Mammary epithelial cell (primary cell): ENCODE measurements at regions of chr18 and their contacts with region 1.

Region 1: DNA sequence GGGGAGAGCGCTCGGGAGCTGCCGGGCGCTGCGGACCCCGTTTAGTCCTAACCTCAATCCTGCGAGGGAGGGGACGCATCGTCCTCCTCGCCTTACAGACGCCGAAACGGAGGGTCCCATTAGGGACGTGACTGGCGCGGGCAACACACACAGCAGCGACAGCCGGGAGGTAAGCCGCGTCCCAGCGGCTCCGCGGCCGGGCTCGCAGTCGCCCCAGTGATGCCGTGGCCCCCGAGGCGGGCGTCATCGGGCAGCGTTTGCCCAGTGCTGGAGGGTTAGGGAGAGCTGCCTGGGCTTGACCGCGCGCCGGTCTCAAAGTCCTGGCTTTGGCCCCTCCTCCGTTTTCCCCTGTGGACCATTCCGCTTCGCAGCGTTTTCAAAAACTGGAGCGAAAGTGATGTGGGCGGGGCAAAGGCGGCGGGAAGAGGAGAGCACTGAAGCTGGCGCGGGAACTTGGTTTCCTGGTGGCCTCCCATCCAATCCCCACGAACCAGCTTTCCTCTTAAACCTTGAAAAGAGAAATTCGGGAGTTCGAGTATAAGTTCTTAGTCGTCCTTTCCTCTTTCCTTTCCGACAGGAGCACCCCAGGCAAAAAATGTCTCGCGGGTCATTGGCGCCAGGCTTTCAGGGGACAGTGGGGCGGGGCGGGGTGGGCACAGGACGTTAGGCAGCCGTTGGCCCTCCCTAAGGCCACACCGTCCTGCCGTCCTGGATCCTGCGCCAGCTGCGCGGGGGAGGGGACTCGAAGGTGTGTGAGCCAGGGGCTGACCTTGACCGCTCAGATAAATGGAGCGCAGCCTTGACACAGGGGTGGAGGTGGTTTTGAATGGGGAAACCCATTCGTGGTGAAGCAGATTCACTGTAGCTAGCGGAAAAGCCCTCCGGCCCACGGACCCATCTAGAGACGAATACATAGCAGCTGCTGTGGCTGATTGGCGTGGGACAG is 821 bp downstream of the TYMS start:
- DNase-seq: peak; percentile 92
- H3K4me3 ChIP-seq: peak overlapping the region; percentile 79 to 92 (median 88)
- H3K27ac ChIP-seq: peak overlapping the region; percentile 77
- H3K4me1 ChIP-seq: peaks cover 11% of the 10 kb centered on the region
- H3K27me3 ChIP-seq: no peaks in the 10 kb centered on the region
- CTCF ChIP-seq: no peak

Region 2: GRCh38 chr18:335733-336132 is 322.5 kb before region 1 on chr18:
- CTCF ChIA-PET with region 1: no interaction called
- dilution Hi-C with region 1: no loop called
- in situ Hi-C with region 1: no loop called
- intact Hi-C with region 1: no loop called
- DNase-seq: no peak
- H3K4me3 ChIP-seq: no peak overlapping the region
- H3K27ac ChIP-seq: no peak overlapping the region
- H3K4me1 ChIP-seq: no peaks in the 10 kb centered on the region
- H3K27me3 ChIP-seq: no peaks in the 10 kb centered on the region
- CTCF ChIP-seq: no peak

Region 3: DNA sequence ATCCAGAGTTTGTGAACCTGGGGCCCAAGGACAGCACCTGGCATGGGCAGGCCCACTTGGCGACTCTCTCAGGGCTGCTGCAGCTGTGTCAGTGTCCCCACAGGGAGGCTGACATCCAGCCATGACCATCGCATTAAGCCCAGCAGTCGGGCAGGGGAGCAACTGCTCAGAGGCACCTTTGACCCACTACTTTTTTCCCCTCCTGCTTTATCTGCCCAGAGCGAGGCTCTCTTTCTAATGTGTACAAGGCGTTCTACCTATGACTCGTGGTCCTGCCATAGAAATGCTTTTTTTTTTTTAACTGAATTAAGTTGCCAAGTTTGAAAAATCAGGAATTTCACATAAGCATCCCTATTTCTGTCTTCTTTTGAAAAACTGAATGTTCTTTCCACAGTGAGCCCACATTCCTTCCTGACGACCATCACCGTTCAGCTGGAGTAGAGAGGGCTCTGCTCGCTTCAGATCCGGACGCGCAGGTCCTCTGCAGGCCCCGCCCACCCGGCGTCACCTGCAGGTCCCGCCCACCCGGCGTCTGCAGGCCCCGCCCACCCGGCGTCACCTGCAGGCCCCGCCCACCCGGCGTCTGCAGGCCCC is 61.9 kb before region 1 on chr18:
- CTCF ChIA-PET with region 1: no interaction called
- dilution Hi-C with region 1: no loop called
- in situ Hi-C with region 1: no loop called
- intact Hi-C with region 1: loop called (anchors 2 kb)
- DNase-seq: peak; percentile 41
- H3K4me3 ChIP-seq: peak overlapping the region; percentile 6 to 34 (median 31)
- H3K27ac ChIP-seq: no peak overlapping the region
- H3K4me1 ChIP-seq: peaks cover 4% of the 10 kb centered on the region
- H3K27me3 ChIP-seq: no peaks in the 10 kb centered on the region
- CTCF ChIP-seq: no peak

Region 4: GRCh38 chr18:629269-630150 is 28.8 kb before region 1 on chr18:
- CTCF ChIA-PET with region 1: no interaction called
- dilution Hi-C with region 1: no loop called
- in situ Hi-C with region 1: no loop called
- intact Hi-C with region 1: loop called (anchors 2 kb)
- DNase-seq: no peak
- H3K4me3 ChIP-seq: no peak overlapping the region
- H3K27ac ChIP-seq: no peak overlapping the region
- H3K4me1 ChIP-seq: peaks cover 2% of the 10 kb centered on the region
- H3K27me3 ChIP-seq: no peaks in the 10 kb centered on the region
- CTCF ChIP-seq: peak; percentile 9 to 20

Region 5: GRCh38 chr18:703213-703967 is 45.1 kb after region 1 on chr18:
- CTCF ChIA-PET with region 1: no interaction called
- dilution Hi-C with region 1: loop called (anchors 5 kb)
- in situ Hi-C with region 1: no loop called
- intact Hi-C with region 1: loop called (anchors 5 kb)
- DNase-seq: peak; percentile 67
- H3K4me3 ChIP-seq: no peak overlapping the region
- H3K27ac ChIP-seq: peak overlapping the region; percentile 64
- H3K4me1 ChIP-seq: peaks cover 15% of the 10 kb centered on the region
- H3K27me3 ChIP-seq: no peaks in the 10 kb centered on the region
- CTCF ChIP-seq: no peak

Region 6: GRCh38 chr18:712401-713134 is 54.3 kb after region 1 on chr18 and contains the start of gene ENOSF1:
- CTCF ChIA-PET with region 1: no interaction called
- dilution Hi-C with region 1: loop called (anchors 5 kb)
- in situ Hi-C with region 1: no loop called
- intact Hi-C with region 1: no loop called
- DNase-seq: peak; percentile 73
- H3K4me3 ChIP-seq: peak within 1 kb of the TSS; percentile 62 to 92 (median 78)
- H3K27ac ChIP-seq: peak within 1 kb of the TSS; percentile 88
- H3K4me1 ChIP-seq: peaks cover 12% of the 10 kb centered on the region
- H3K27me3 ChIP-seq: no peaks in the 10 kb centered on the region
- CTCF ChIP-seq: peak; percentile 54 to 81
- total RNA-seq, gene ENOSF1: 24.5 to 78.7 TPM

Region 7: DNA sequence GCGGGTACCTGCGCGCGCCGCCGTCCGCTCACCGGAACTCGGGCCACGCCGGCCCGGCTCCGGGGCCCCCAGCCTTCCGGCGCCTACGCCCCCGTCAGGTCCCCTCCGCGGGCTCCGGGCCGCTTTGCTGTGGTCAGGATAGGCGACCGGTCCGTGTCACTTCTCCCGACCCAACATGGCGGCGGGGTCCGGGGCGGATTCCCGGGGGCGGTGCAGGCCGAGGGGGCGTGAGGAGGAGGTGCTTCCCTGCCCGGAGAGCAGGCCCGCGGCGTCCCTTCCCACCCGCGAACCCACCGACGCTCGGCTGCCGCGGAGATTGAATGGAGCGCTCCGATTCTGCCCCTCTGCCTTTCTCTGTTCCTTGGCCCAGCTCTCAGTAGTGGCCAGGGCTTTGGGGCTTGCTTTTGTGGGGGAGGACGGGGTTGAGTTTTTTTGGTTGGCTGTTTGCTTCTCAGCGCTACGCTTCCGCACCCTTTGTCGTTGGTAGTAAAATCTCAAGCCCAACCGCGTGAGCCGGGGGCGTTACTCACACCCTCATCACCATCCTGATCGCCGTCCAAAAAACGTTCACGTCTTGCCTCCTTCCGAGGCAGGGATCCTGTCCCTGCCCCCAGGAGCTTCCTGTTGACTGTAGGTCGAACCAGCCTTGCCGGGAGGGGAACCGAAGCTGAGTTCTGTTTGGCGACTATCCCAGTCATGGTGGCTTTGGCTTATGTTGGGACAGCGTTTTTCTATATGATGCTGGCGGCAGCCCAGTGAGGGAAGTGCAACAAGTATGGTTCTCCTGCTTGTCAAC is 154.3 kb after region 1 on chr18:
- CTCF ChIA-PET with region 1: no interaction called
- dilution Hi-C with region 1: no loop called
- in situ Hi-C with region 1: no loop called
- intact Hi-C with region 1: loop called (anchors 5 kb)
- DNase-seq: peak; percentile 75
- H3K4me3 ChIP-seq: peak overlapping the region; percentile 75 to 100 (median 95)
- H3K27ac ChIP-seq: peak overlapping the region; percentile 92
- H3K4me1 ChIP-seq: peaks cover 6% of the 10 kb centered on the region
- H3K27me3 ChIP-seq: no peaks in the 10 kb centered on the region
- CTCF ChIP-seq: no peak

Region 8: DNA sequence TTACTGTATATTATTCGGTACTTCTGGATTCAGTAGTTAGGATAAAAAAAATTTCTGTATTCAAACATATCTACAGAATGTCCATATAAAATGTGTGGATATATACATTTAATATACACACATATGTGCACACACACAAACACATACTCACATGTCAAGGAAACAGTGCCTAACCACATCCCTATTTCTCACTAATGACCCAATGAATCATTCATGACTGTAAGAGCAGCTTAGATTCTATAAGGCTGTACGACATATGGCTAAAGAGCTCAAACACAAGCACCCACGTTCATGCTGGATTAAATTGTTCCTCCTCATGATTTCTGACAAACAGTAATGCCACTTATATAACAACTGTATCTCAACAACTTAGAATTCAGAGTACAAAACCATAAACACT is 703.7 kb after region 1 on chr18:
- CTCF ChIA-PET with region 1: no interaction called
- dilution Hi-C with region 1: no loop called
- in situ Hi-C with region 1: no loop called
- intact Hi-C with region 1: no loop called
- DNase-seq: no peak
- H3K4me3 ChIP-seq: no peak overlapping the region
- H3K27ac ChIP-seq: no peak overlapping the region
- H3K4me1 ChIP-seq: no peaks in the 10 kb centered on the region
- H3K27me3 ChIP-seq: no peaks in the 10 kb centered on the region
- CTCF ChIP-seq: no peak